Aorta (tissue), 5 donors: ENCODE measurements at regions of chr19 and their contacts with region 1.

Region 1: DNA sequence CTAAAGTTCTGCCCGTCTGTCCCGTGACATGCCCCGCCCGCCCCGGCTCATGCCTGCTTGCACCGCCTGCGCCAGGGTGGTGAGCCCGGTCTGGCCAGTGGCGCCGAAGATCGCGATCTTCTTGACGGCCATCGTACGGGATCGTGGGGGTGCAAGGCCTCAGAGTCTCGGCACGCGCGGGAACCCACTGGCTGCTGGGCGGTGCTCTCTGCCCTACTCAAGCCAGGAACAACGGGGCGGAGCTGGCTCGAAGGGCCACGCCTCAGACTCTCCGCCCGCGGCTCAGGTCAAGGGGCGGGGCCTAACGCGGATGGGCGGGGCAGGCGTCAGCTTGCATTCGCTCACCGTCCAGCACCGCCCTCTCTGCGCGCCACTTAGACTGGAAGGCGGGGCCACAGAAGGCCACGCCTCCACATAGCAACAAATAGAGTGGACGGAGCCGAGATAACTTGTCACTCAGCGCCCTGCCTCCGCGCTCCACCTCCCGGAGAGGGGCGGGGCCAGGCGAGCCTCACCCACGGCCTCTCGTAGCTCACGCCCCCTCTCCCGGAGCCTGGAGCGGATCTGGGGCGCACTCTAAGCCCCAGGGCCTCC is at the start of gene BLVRB:
- DNase-seq: peak; percentile 100
- ATAC-seq: peak; percentile 98
- H3K4me3 ChIP-seq: peak within 1 kb of the TSS; percentile 46 to 57
- H3K27ac ChIP-seq: peak within 1 kb of the TSS; percentile 52 to 56
- H3K4me1 ChIP-seq: peaks cover 0 to 3% of the 10 kb centered on the region in 2 donors
- H3K27me3 ChIP-seq: no peaks in the 10 kb centered on the region
- total RNA-seq, gene BLVRB: 72.3 to 77.1 TPM

Region 2: GRCh38 chr19:40598121-40598917 is 132.7 kb after region 1 on chr19:
- intact Hi-C with region 1: loop called (anchors 10 kb)
- DNase-seq: peak; percentile 91 to 97
- ATAC-seq: peak; percentile 84
- H3K4me3 ChIP-seq: no peak overlapping the region
- H3K27ac ChIP-seq: no peak overlapping the region
- H3K4me1 ChIP-seq: no peaks in the 10 kb centered on the region
- H3K27me3 ChIP-seq: no peaks in the 10 kb centered on the region

Region 3: GRCh38 chr19:40603389-40604135 is 137.9 kb after region 1 on chr19:
- intact Hi-C with region 1: loop called (anchors 10 kb)
- DNase-seq: peak; percentile 98 to 99
- ATAC-seq: peak; percentile 87
- H3K4me3 ChIP-seq: peak overlapping the region in 1 of 2 donors; percentile 11
- H3K27ac ChIP-seq: peak overlapping the region; percentile 5 to 69
- H3K4me1 ChIP-seq: no peaks in the 10 kb centered on the region
- H3K27me3 ChIP-seq: no peaks in the 10 kb centered on the region

Region 4: DNA sequence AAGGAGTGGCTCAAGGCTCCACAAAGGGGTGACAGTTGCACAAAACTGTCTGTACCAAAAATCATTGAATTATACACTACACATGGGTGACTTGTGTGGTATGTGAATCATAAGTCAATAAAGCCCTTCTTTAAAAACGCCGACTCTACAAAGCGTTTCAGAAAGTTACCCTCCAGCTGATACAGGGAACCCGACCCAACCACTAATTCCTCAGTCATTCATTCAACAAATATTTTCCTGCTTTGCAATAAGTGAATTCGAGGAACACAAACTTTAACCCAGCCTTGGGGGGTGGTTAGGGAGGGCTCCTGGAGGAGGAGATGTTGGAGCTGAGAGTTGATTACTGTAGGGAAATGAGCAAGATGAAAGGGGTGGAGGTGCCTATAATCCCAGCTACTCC is 167.6 kb after region 1 on chr19:
- intact Hi-C with region 1: loop called in 1 of 2 experiments (anchors 10 kb)
- DNase-seq: no peak
- ATAC-seq: no peak
- H3K4me3 ChIP-seq: no peak overlapping the region
- H3K27ac ChIP-seq: peak overlapping the region in 1 of 2 donors; percentile 19
- H3K4me1 ChIP-seq: no peaks in the 10 kb centered on the region
- H3K27me3 ChIP-seq: no peaks in the 10 kb centered on the region